H1 (cell line): ENCODE measurements at regions of chr5 and their contacts with region 1.

Region 1: GRCh38 chr5:92518318-92518904 is 1062.6 kb downstream of the NR2F1-AS1 start:
- DNase-seq: no peak
- H3K4me3 ChIP-seq: no peak overlapping the region
- H3K27ac ChIP-seq: no peak overlapping the region
- H3K4me1 ChIP-seq: no peaks in the 10 kb centered on the region
- H3K27me3 ChIP-seq: no peaks in the 10 kb centered on the region
- CTCF ChIP-seq: peak in 2 of 3 experiments; percentile 42 to 65; a peak in 3 of 4 replicates
- EP300 ChIP-seq: no peak
- POLR2A ChIP-seq: no peak
- RAD21 ChIP-seq: peak; percentile 45 to 64

Region 2: GRCh38 chr5:92337772-92338234 is 180.6 kb before region 1 on chr5:
- CTCF ChIA-PET with region 1: no interaction called
- POLR2A ChIA-PET with region 1: no interaction called
- DNase-seq: no peak
- H3K4me3 ChIP-seq: no peak overlapping the region
- H3K27ac ChIP-seq: no peak overlapping the region
- H3K4me1 ChIP-seq: no peaks in the 10 kb centered on the region
- H3K27me3 ChIP-seq: no peaks in the 10 kb centered on the region
- CTCF ChIP-seq: no peak
- EP300 ChIP-seq: no peak
- POLR2A ChIP-seq: no peak
- RAD21 ChIP-seq: no peak

Region 3: GRCh38 chr5:92500752-92501151 is 17.7 kb before region 1 on chr5:
- CTCF ChIA-PET with region 1: interaction called, 13 read pairs
- POLR2A ChIA-PET with region 1: no interaction called
- DNase-seq: no peak
- H3K4me3 ChIP-seq: no peak overlapping the region
- H3K27ac ChIP-seq: no peak overlapping the region
- H3K4me1 ChIP-seq: no peaks in the 10 kb centered on the region
- H3K27me3 ChIP-seq: no peaks in the 10 kb centered on the region
- CTCF ChIP-seq: no peak
- EP300 ChIP-seq: no peak
- POLR2A ChIP-seq: no peak
- RAD21 ChIP-seq: no peak

Region 4: GRCh38 chr5:92505925-92506324 is 12.5 kb before region 1 on chr5:
- CTCF ChIA-PET with region 1: interaction called, 13 read pairs
- POLR2A ChIA-PET with region 1: no interaction called
- DNase-seq: no peak
- H3K4me3 ChIP-seq: no peak overlapping the region
- H3K27ac ChIP-seq: no peak overlapping the region
- H3K4me1 ChIP-seq: no peaks in the 10 kb centered on the region
- H3K27me3 ChIP-seq: no peaks in the 10 kb centered on the region
- CTCF ChIP-seq: no peak
- EP300 ChIP-seq: no peak
- POLR2A ChIP-seq: no peak
- RAD21 ChIP-seq: no peak

Region 5: DNA sequence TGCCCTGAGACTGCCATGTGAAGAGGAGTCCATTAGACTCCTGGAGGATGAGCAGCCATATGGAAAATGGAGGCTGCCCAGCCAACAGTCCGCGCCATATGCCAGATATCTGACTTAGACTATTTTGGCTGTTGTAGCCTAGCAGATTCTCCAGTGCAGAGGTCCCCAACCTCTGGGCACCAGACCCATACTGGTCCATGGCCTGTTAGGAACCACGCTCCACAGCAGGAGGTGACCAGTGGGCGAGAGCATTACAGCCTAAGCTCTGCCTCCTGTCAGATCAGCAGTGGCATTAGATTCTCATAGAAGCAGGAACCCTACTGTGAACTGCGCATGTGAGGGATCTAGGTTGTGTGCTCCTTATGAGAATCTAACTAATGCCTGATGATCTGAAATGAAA is 210.7 kb after region 1 on chr5:
- CTCF ChIA-PET with region 1: no interaction called
- POLR2A ChIA-PET with region 1: no interaction called
- DNase-seq: no peak
- H3K4me3 ChIP-seq: no peak overlapping the region
- H3K27ac ChIP-seq: no peak overlapping the region
- H3K4me1 ChIP-seq: no peaks in the 10 kb centered on the region
- H3K27me3 ChIP-seq: no peaks in the 10 kb centered on the region
- CTCF ChIP-seq: no peak
- EP300 ChIP-seq: no peak
- POLR2A ChIP-seq: no peak
- RAD21 ChIP-seq: no peak